ENCODE measurements at regions of chr17 and their contacts with region 1.

Region 1: DNA sequence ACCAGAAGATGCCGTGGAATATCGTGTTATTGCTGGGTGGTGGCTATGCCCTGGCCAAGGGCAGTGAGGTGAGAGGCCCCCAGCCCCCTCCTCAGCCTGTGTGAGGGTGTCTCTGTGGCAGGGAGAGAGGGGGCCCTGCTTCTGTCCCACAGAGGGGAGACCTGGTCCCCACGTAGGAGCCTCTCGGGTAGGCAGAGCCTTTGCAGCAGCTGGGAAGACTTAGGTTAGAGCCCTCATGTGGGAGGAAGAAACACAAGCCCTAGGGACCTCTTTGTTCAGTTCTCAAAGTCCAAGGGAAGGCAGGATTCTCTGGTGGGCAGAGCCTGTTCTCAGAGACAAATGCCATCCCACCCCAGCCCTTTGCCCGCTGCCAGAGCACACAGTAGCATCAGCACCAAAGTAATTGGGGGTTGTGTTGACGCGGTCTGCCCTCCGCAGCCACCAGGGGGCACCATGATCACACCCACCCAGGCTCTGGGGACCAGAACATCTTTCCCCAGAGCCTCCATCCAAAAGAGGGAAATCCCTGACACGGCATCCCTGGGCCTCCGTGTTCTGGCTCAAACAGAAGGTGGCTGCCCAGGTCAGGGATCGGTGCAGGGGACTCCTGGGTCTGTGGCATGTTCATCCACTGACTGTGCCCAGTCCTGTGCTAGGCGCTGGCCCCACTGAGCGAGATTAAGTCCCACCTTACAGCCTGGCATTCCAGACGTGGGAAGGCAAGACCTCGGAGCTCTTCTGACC is 11.5 kb upstream of the FOXN1 start:
- DNase-seq: peak; percentile 64 to 89 (median 85)
- ATAC-seq: peak; percentile 54 to 75
- H3K4me3 ChIP-seq: no peak overlapping the region
- H3K27ac ChIP-seq: no peak overlapping the region
- H3K4me1 ChIP-seq: no peaks in the 10 kb centered on the region
- H3K27me3 ChIP-seq: no peaks in the 10 kb centered on the region

Region 2: DNA sequence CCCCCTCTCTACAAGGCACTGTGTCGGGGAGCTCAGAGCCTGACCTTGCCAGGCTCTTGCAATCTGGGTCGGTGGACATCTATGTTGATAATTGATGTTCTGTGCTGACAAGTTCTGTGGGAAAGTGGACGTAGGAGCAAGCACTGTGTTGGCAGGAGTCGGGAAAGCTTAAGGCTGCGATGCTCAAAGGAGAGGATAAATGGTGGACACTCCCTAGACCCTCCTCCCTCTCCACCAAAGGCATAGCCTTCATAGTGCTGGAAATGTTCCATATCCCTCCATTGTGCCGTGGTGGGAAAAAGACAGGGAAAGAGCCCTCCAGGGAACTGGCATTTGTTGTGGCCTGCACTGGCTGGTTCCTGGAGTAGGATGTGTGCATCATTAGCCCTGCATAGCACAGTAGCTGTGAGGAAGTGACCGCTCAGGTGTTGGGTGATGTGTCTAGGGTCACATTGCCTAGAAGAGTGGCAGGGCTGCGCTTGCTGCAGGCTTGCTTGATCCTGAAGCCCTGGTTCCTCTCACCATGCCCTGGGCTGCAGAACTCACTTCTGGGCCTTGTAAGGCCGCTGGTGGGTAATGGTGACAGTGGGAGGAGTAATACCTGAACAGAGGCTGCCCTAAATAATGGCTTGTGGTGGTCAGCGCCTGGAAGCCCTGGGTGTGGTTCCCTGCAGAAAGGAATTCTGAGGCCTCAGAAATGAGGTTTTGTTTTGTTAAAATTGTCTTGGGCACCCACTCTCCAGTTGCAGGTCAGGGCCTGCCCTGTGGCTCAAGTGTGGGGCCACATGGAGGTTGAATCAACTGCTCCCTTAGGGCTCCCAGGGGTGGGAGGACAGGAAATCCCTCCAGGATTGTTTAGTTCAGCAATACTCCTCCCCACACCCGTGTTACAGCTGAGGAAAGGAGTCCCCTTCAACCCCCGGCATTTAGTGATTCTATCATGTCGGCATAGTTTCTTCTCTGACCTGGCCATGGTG is 975.8 kb before region 1 on chr17:
- intact Hi-C with region 1: no loop called
- DNase-seq: no peak
- ATAC-seq: no peak
- H3K4me3 ChIP-seq: no peak overlapping the region
- H3K27ac ChIP-seq: no peak overlapping the region
- H3K4me1 ChIP-seq: peaks cover 5% of the 10 kb centered on the region
- H3K27me3 ChIP-seq: no peaks in the 10 kb centered on the region

Region 3: DNA sequence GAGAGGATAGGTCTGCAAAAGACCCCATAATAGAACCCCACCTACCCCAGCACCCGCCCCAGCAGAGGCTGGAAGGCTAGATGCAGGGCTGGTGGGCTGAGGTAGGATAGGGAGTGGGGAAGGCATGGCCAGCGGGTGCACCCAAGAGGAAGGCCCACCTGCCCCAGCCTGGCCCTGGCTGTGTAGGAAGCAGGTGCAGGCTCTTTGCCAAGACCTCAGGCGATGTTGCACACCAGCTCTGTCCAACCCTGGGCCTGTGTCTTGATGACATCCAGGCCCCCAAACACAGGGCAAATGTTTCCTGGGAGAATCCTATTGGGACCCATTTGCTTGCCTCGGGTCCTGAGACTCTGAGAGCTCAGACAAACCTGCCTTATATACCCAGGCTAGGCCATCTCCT is 45.6 kb after region 1 on chr17:
- intact Hi-C with region 1: loop called in 3 of 4 experiments (anchors 2 to 10 kb)
- DNase-seq: no peak
- ATAC-seq: no peak
- H3K4me3 ChIP-seq: no peak overlapping the region
- H3K27ac ChIP-seq: no peak overlapping the region
- H3K4me1 ChIP-seq: no peaks in the 10 kb centered on the region
- H3K27me3 ChIP-seq: no peaks in the 10 kb centered on the region

Region 4: GRCh38 chr17:28612936-28613872 is 118.6 kb after region 1 on chr17:
- intact Hi-C with region 1: loop called in 3 of 4 experiments (anchors 5 kb)
- DNase-seq: no peak
- ATAC-seq: peak; percentile 46
- H3K4me3 ChIP-seq: no peak overlapping the region
- H3K27ac ChIP-seq: no peak overlapping the region
- H3K4me1 ChIP-seq: no peaks in the 10 kb centered on the region
- H3K27me3 ChIP-seq: no peaks in the 10 kb centered on the region